ENCODE measurements at regions of chr16 and their contacts with region 1.

Region 1: DNA sequence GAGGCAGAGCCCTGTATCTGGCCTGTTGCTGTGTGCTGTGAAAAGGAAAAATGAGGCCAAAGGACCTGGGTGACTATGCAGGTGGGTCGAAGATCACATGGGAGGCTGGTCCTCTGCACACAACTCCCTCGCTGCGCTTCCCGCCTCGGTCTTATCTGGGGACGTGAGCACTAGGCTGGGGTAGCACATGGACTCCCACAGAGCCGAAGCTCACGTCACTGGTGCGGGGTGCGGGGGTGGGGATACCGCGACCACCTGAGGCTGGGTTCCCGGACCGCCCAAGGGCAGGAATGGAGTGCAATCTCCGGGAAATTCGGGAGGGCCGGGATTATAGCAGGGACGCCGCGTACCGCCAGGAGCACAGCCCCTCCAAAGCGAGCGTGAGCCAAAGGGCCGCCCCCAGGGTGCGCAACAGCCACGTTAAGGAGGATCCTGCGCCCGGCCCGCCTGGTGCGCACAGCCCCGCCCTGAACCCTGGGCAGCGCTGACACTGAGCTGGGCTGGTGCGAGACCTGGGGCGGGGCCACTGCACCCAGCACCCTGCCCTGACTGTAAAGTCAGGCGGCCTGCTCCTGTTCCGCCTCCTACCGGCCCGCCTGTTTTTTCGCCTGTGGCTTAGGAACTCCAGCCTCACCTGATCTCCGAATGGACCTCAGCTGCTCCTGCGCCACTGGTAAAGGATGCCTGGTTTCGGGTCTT is 4.8 kb downstream of the MT1A start:
- DNase-seq: peak; percentile 91
- ATAC-seq: peak; percentile 100
- H3K4me3 Mint-ChIP-seq: peak overlapping the region; percentile 60
- H3K27ac Mint-ChIP-seq: no peak overlapping the region
- H3K4me1 Mint-ChIP-seq: peaks cover 17% of the 10 kb centered on the region
- H3K27me3 Mint-ChIP-seq: peaks cover 38% of the 10 kb centered on the region
- CTCF ChIP-seq: peak; percentile 49

Region 2: DNA sequence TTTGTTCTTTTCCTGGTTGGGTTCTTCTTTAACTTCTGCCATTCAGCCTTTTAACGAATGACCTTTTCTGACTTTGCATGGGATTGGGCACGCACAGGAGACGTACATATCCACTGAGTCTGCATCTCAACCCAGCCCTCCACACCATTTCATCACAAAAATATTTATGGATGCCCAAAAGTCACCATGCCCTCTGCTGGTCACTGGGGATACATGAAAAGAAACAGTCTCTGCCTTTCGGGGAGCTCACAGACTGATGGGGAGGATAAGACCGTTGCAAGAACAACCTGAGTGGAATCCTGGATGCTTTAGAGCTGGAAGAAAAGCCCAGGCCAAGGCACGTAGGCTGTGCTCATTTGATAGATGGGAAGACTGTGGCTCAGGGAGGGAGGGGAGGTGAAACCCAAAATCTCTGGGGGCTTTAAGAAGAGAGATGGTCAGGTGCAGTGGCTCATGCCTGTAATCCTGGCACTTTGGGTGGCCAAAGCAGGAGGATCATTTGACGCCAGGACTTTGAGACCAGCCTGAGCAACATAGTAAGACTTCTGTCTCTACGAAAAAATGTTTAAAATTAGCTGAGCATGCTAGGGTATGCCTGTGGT is 42.7 kb before region 1 on chr16:
- CTCF ChIA-PET with region 1: interaction called, 11 read pairs
- POLR2A ChIA-PET with region 1: no interaction called
- intact Hi-C with region 1: no loop called
- DNase-seq: peak; percentile 67
- ATAC-seq: peak; percentile 81
- H3K4me3 Mint-ChIP-seq: no peak overlapping the region
- H3K27ac Mint-ChIP-seq: no peak overlapping the region
- H3K4me1 Mint-ChIP-seq: peaks cover 3% of the 10 kb centered on the region
- H3K27me3 Mint-ChIP-seq: peaks cover 6% of the 10 kb centered on the region
- CTCF ChIP-seq: peak; percentile 69

Region 3: DNA sequence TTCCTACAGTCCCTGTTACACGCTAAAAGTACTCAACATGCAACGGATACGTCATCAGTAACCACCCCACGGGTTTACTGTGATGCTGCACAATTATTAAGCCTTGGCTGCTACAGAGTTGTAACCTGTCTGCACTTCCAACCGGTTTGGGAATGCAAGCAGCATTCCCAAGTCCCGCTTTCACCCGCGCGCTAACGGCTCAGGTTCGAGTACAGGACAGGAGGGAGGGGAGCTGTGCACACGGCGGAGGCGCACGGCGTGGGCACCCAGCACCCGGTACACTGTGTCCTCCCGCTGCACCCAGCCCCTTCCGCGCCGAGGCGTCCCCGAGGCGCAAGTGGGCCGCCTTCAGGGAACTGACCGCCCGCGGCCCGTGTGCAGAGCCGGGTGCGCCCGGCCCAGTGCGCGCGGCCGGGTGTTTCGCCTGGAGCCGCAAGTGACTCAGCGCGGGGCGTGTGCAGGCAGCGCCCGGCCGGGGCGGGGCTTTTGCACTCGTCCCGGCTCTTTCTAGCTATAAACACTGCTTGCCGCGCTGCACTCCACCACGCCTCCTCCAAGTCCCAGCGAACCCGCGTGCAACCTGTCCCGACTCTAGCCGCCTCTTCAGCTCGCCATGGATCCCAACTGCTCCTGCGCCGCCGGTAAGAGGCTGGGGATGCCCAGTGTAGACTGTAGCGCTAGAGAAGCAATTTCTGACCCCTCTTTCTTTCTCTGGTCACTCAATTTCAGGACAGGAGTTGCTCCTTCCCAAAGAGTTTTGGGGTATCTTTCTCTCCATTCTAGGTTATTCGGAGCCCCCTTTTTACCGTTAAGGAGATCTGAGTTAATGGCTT is 35.0 kb before region 1 on chr16 and contains the start of gene MT2A:
- CTCF ChIA-PET with region 1: interaction called, 12 read pairs
- POLR2A ChIA-PET with region 1: interaction called, 3 read pairs
- intact Hi-C with region 1: no loop called
- DNase-seq: peak; percentile 97
- ATAC-seq: peak; percentile 77
- H3K4me3 Mint-ChIP-seq: peak within 1 kb of the TSS; percentile 81
- H3K27ac Mint-ChIP-seq: peak within 1 kb of the TSS; percentile 94
- H3K4me1 Mint-ChIP-seq: peaks cover 56% of the 10 kb centered on the region
- H3K27me3 Mint-ChIP-seq: no peaks in the 10 kb centered on the region
- CTCF ChIP-seq: no peak
- total RNA-seq, gene MT2A: 141 to 144 TPM

Region 4: DNA sequence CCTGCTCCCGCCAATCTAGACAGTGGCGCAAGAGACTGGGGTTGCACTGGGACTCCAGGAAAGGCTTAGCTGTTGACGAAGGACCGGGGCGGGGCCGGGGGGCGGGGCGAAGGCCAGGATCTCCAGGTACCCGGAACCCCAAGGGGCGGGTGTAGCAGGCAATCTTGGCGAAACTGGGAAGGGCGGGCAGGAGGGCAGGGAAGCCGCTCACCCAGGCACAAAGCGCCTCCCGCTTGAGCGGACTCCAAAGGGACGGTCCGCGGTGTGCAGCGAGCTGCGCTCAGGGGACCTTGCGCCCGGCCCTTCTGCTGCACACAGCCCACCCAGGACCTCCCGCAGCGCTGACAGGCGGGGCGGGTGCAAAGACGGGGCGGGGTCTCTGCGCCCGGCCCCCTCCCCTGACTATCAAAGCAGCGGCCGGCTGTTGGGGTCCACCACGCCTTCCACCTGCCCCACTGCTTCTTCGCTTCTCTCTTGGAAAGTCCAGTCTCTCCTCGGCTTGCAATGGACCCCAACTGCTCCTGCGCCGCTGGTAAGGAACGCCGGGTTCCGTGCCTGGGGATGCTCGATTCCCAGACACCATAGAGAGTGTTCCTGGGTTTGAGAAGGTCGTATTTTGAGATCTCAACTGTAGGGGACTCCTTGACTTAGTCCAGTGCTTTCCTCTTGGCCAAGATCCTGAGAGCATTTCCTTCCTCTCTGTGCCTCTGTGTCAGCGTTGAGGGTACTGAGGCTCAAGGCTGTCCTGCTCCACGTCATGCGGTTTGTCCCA is 14.5 kb after region 1 on chr16 and contains the start of gene MT1F:
- CTCF ChIA-PET with region 1: interaction called, 14 read pairs
- POLR2A ChIA-PET with region 1: interaction called, 5 read pairs
- intact Hi-C with region 1: no loop called
- DNase-seq: peak; percentile 82
- ATAC-seq: peak; percentile 83
- H3K4me3 Mint-ChIP-seq: peak within 1 kb of the TSS; percentile 92
- H3K27ac Mint-ChIP-seq: peak within 1 kb of the TSS; percentile 82
- H3K4me1 Mint-ChIP-seq: peaks cover 14% of the 10 kb centered on the region
- H3K27me3 Mint-ChIP-seq: no peaks in the 10 kb centered on the region
- CTCF ChIP-seq: no peak
- total RNA-seq, gene MT1F: 7.7 to 9.0 TPM

Region 5: DNA sequence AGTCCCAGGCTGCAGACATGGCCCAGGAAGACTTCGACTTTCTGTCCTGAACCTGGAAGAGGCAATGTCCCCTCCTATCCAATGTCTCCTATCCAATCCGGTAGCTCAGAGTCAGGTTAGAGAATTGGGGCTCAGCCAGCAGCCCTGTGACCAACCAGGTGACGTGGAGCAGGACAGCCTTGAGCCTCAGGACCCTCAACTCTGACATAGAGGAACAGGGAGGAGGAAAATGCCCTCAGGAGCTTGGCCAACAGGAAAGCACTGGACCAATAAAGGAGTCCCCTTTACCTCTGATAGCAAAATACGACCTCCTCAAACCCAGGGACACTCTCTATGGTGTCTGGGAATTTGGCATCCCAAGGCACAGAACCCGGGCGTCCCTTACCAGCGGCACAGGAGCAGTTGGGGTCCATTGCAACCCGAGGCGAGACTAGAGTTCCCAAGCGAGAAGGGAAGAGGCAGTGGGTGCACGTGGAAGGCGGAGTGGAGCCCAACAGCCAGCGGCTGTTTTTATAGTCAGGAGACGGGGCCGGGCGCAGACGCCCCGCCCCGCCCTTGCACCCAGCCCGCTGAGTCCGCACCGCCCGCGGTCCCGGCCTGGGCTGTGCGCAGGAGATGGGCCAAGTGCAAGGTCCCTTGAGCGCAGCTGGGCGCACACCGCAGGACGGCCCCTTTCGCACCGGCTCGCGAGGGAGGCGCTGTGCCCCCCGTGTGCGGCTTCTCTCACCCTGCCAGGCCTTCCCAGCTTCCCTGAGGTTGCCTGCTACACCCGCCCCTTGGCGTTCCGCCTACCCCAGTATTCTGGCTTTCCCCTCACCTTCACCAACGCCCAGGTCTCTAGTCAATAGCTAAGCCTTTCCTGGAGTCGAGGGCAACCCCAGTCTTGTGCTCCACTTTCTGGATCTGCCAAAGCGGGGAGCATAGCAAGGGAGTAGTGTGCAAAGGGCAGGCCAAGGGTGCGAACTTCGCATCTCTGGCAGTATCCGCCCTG is 24.6 kb after region 1 on chr16 and contains the start of gene MT1G:
- CTCF ChIA-PET with region 1: interaction called, 3 read pairs
- POLR2A ChIA-PET with region 1: interaction called, 13 read pairs
- intact Hi-C with region 1: no loop called
- DNase-seq: peak; percentile 58
- ATAC-seq: peak; percentile 75
- H3K4me3 Mint-ChIP-seq: peak within 1 kb of the TSS; percentile 65
- H3K27ac Mint-ChIP-seq: no peak within 1 kb of the TSS
- H3K4me1 Mint-ChIP-seq: peaks cover 20% of the 10 kb centered on the region
- H3K27me3 Mint-ChIP-seq: peaks cover 72% of the 10 kb centered on the region
- CTCF ChIP-seq: no peak
- total RNA-seq, gene MT1G: 35.9 to 39.0 TPM

Region 6: DNA sequence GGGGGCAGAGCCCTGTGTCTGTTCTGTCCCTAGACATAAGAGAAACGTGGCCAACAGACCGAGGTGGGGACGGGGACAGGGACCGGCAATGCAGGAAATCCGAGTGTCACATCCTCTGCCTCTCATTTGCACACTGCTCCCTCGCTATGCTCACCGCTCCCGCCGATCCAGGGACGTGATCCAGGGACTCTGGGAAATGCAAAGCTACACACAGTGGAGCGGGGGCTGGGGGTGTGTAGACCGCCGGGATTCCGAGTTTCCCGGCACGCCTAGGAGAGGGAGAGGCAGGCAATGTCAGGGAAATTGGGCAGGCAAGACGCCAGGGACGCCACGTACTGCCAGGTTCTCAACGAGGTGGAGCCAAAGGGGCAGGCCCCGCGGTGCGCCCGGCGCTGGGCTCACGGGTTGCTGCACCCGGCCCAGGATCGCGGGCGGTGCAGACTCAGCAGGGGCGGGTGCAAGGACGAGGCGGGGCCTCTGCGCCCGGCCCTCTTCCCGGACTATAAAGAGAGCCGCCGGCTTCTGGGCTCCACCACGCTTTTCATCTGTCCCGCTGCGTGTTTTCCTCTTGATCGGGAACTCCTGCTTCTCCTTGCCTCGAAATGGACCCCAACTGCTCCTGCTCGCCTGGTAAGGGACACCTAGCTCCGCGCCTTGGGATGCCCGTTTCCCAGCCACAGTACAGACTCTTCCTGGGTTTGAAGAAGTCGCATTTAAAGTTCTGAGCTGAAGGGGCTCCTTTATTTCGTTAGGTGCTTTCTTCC is 38.9 kb after region 1 on chr16 and contains the start of gene MT1X:
- CTCF ChIA-PET with region 1: interaction called, 4 read pairs
- POLR2A ChIA-PET with region 1: interaction called, 10 read pairs
- intact Hi-C with region 1: no loop called
- DNase-seq: peak; percentile 95
- ATAC-seq: peak; percentile 97
- H3K4me3 Mint-ChIP-seq: peak within 1 kb of the TSS; percentile 86
- H3K27ac Mint-ChIP-seq: peak within 1 kb of the TSS; percentile 97
- H3K4me1 Mint-ChIP-seq: peaks cover 21% of the 10 kb centered on the region
- H3K27me3 Mint-ChIP-seq: no peaks in the 10 kb centered on the region
- CTCF ChIP-seq: no peak
- total RNA-seq, gene MT1X: 52.5 to 54.2 TPM

Region 7: GRCh38 chr16:56708525-56709442 is 65.6 kb after region 1 on chr16:
- CTCF ChIA-PET with region 1: interaction called, 11 read pairs
- POLR2A ChIA-PET with region 1: no interaction called
- intact Hi-C with region 1: no loop called
- DNase-seq: peak; percentile 63
- ATAC-seq: peak; percentile 82
- H3K4me3 Mint-ChIP-seq: peak overlapping the region; percentile 77
- H3K27ac Mint-ChIP-seq: peak overlapping the region; percentile 96
- H3K4me1 Mint-ChIP-seq: peaks cover 56% of the 10 kb centered on the region
- H3K27me3 Mint-ChIP-seq: no peaks in the 10 kb centered on the region
- CTCF ChIP-seq: no peak

Measured in activated CD8-positive, alpha-beta T cell treated with anti-CD3 and anti-CD28 coated beads for 36 hours (primary cell).